Activated T-helper 2 cell treated with anti-CD3 and anti-CD28 coated beads, Interferon-gamma antibody, Interleukin-2, Interleukin-4, amounts not matched to agents 10 μg/mL and 5 μg/mL and 100 μg/mL, durations not matched to agents 14 hours and 24 hours and 36 hours (primary cell): ENCODE measurements at regions of chr1 and their contacts with region 1.

Region 1: DNA sequence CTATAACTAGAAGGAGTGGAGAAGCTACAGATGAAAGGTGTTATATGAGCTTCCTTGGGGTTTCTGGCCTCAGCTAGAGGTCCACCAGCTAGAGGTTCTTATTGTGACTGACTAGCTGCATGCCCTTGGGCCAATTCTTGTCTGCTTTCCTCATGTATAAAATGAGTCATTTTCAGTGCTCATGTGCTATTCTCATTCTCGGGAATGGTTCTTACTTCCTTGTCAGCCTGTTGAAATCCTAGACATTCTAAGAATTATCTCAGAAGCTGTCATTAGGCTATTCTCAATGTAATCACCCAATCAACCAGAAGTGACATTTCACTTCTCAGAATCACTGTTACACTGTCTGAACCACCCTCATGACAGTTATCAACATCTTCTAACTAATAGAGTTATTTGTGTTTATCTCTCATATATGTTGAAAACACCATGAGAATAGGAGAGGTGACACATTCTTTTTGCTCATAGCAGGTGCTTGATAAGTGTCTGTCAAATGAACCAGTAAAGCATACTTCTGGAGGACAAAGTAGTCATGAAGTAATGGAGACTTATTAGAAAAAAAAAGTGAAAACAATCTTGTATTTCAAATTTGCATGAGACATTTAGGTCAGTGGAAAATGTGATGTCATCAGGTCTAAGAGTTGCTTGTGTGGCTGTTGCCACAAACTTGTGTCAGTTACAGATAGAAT is 122.8 kb upstream of the IVNS1ABP start:
- DNase-seq: peak; percentile 44
- H3K4me3 Mint-ChIP-seq: no peak overlapping the region
- H3K27ac Mint-ChIP-seq: no peak overlapping the region
- H3K4me1 Mint-ChIP-seq: peaks cover 19% of the 10 kb centered on the region
- H3K27me3 Mint-ChIP-seq: no peaks in the 10 kb centered on the region

Region 2: GRCh38 chr1:185338719-185339622 is 100.9 kb before region 1 on chr1:
- intact Hi-C with region 1: loop called (anchors 1 kb)
- DNase-seq: peak; percentile 47
- H3K4me3 Mint-ChIP-seq: peak overlapping the region; percentile 36
- H3K27ac Mint-ChIP-seq: peak overlapping the region; percentile 63
- H3K4me1 Mint-ChIP-seq: peaks cover 35% of the 10 kb centered on the region
- H3K27me3 Mint-ChIP-seq: no peaks in the 10 kb centered on the region

Region 3: DNA sequence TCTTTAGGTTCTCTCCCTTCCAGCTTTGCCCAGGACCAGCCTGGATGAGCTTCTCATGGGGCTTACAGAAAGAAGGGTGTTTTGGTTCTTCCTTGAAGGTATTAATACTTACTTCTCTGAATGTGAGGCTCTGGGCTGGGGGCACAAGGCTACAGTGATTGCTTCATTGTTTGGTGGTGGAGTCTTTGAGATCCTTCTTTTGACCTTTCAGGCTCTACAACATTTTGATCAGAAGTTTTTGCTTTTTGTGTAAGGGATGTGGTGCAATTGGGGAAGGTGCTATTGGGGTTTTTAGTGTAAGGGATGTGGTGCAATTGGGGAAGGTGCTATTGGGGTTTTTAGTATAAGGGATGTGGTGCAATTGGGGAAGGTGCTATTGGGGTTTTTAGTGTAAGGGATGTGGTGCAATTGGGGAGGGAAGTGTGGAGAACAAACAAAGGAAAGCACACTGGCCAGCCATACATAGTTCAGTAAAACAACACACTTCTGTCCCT is 19.2 kb before region 1 on chr1:
- intact Hi-C with region 1: loop called (anchors 2 kb)
- DNase-seq: peak; percentile 22
- H3K4me3 Mint-ChIP-seq: no peak overlapping the region
- H3K27ac Mint-ChIP-seq: peak overlapping the region; percentile 43
- H3K4me1 Mint-ChIP-seq: peaks cover 34% of the 10 kb centered on the region
- H3K27me3 Mint-ChIP-seq: no peaks in the 10 kb centered on the region

Region 4: GRCh38 chr1:185483664-185484450 is 44.0 kb after region 1 on chr1:
- intact Hi-C with region 1: no loop called
- DNase-seq: no peak
- H3K4me3 Mint-ChIP-seq: no peak overlapping the region
- H3K27ac Mint-ChIP-seq: no peak overlapping the region
- H3K4me1 Mint-ChIP-seq: peaks cover 4% of the 10 kb centered on the region
- H3K27me3 Mint-ChIP-seq: no peaks in the 10 kb centered on the region

Region 5: DNA sequence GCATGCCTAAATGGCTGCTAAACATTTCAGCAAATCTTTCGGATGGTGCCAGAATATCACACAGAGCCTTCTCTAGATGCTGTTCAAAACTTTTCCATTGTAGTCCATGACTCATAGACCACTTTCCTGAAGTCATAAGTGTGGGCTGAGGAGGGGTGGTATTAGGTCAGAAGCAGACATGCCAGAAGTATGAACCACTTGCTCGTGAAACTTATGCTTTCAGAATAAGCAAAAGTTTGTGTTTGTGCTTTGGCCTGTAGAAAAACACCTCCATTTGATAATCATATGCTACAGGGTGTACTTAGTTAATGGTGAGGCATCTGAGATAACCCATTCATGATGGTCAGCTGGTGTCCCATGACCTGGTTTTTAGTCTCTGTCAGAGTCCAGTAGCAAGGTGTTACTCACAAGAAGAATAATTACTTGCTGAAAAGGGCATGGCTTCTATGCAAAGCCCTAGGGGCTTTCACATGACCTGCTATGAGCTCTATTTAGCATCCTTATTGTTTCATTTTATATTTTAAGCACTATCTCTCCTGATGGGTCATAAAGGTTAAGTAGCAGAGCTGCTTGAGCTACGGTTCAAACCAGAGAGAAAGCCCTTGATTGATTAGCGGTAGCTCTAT is 60.2 kb after region 1 on chr1:
- intact Hi-C with region 1: loop called (anchors 1 kb)
- DNase-seq: no peak
- H3K4me3 Mint-ChIP-seq: no peak overlapping the region
- H3K27ac Mint-ChIP-seq: peak overlapping the region; percentile 48
- H3K4me1 Mint-ChIP-seq: peaks cover 30% of the 10 kb centered on the region
- H3K27me3 Mint-ChIP-seq: no peaks in the 10 kb centered on the region

Region 6: DNA sequence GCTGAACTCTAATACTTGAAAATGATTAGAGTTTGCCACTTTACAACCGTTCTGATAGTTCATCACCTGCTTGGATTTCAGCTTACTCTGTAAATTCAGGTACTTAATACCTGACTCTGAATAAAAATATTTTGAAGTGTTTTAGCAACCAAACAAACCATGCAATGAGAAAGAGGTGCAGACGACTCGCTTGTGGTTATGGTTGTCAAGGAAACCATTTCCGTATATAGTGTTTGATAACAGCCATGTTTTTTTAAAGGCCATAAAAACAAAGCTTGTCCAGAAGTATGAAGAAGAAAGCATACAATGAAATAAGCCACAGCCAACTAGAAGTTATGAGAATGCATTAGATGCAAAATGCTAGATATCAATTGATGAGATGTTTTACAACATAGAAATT is 127.1 kb after region 1 on chr1:
- intact Hi-C with region 1: loop called (anchors 2 kb)
- DNase-seq: peak; percentile 36
- H3K4me3 Mint-ChIP-seq: no peak overlapping the region
- H3K27ac Mint-ChIP-seq: peak overlapping the region; percentile 75
- H3K4me1 Mint-ChIP-seq: peaks cover 63% of the 10 kb centered on the region
- H3K27me3 Mint-ChIP-seq: no peaks in the 10 kb centered on the region

Region 7: DNA sequence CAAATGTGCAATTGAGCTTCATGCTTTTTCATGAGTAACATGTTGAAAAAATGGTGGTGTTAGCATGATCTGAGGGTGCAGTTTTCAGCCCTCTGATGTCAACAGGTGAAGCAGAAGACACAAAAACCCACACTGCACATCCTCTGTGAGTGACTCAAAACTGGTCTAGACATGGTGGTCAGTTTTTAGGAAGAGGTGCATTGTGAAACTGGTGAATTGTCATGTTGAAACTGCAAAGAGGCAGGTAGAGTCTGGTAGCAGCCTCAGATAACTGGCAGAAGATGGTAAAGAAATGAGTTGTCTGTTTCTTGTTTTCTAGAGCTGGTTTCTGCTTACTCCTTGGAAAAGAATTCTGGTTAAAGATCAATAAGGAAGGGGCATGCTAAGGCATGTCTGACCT is 197.0 kb after region 1 on chr1:
- intact Hi-C with region 1: loop called (anchors 1 kb)
- DNase-seq: peak; percentile 56
- H3K4me3 Mint-ChIP-seq: no peak overlapping the region
- H3K27ac Mint-ChIP-seq: peak overlapping the region; percentile 79
- H3K4me1 Mint-ChIP-seq: peaks cover 22% of the 10 kb centered on the region
- H3K27me3 Mint-ChIP-seq: no peaks in the 10 kb centered on the region

Region 8: GRCh38 chr1:185670187-185670627 is 230.3 kb after region 1 on chr1:
- intact Hi-C with region 1: loop called (anchors 10 kb)
- DNase-seq: no peak
- H3K4me3 Mint-ChIP-seq: no peak overlapping the region
- H3K27ac Mint-ChIP-seq: no peak overlapping the region
- H3K4me1 Mint-ChIP-seq: peaks cover 44% of the 10 kb centered on the region
- H3K27me3 Mint-ChIP-seq: no peaks in the 10 kb centered on the region